Heart left ventricle (tissue), 16 donors: ENCODE measurements at regions of chr7 and their contacts with region 1.

Region 1: DNA sequence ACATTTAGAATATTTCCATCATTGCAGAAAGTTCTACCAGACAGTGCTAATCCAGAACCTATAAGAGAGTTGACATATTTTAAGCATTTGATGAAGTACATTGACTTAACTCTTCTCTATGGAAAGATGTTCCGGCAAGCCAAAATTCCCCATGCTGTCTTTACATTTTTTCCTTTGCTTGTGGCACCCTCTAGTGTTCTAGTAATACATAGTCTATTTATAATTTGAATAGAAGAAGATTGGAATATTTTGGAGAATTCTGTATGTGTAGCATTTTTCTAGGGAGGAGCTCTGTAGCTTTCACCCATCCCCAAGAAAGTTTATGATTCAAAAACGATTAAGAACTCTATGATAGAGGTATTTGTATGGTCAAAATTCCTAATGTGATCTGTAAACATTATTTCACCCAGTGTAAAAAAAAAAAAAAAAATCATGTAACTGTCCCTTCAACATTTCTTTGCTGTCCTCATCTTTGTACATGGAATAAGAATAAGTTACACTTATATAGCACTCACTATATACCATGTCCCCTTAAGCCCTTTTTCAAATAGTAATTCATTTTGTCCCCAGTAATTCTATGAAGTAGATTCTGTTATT is 33.2 kb downstream of the NRF1 start:
- DNase-seq: no peak
- ATAC-seq: peak in 2 of 4 donors; percentile 37 to 44
- H3K4me3 ChIP-seq: no peak overlapping the region
- H3K27ac ChIP-seq: no peak overlapping the region
- H3K4me1 ChIP-seq: peaks cover 0 to 36% (median 15%) of the 10 kb centered on the region in 12 donors
- H3K27me3 ChIP-seq: no peaks in the 10 kb centered on the region
- CTCF ChIP-seq: peak in 11 of 12 donors; percentile 26 to 62 (median 47)
- POLR2A ChIP-seq: no peak

Region 2: DNA sequence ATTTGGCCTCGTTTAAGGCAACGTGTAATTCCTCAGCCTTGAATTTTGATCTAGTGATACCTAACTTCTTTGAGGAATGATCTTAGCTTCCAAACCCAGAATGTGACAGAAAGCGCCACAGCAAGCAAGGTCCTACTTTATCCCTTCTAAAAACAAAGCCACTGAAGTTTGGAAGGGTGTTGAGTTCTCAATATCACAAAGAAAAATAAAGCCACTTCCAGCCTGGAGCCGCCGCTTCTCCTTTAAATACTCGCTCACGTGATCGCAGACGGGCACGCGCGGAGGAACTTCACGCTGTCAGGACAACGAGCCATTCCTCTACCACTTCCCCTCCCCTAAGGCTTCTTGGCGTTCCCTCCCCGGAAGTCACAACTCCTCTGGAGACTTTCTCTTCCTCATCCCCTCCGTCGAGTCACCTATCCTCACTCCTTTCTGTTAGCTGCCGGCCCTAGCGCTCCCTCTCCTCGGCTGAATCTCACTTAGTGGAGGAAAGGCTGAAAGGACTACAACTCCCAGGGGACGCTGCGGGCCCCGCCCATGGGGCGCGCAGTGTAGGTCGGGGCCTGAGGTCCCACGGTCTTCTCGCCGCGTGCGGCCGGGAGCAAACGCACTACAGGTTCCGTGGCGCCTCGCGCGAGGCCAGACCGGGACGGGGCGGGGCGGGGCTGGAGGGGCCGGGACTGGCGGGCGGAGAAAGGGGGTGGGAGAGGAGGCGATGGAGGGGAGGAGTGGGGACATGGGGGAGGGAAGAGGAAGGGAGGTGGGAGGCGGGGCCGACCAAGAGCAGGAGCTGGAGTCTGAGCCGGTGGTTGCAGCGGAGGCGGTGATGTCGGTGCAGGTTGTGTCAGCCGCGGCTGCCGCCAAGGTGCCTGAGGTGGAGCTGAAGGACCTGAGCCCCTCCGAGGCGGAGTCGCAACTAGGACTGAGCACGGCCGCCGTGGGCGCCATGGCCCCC is 420.2 kb before region 1 on chr7 and contains the start of gene AHCYL2:
- intact Hi-C with region 1: loop called in 1 of 10 experiments (anchors 10 kb)
- DNase-seq: peak; percentile 98 to 99 (median 99)
- ATAC-seq: peak; percentile 99 to 100 (median 99)
- H3K4me3 ChIP-seq: peak within 1 kb of the TSS; percentile 71 to 99 (median 85)
- H3K27ac ChIP-seq: peak within 1 kb of the TSS; percentile 90 to 99 (median 95)
- H3K4me1 ChIP-seq: peaks cover 0 to 31% (median 9%) of the 10 kb centered on the region in 12 donors
- H3K27me3 ChIP-seq: no peaks in the 10 kb centered on the region
- CTCF ChIP-seq: no peak
- POLR2A ChIP-seq: peak in 1 of 2 donors; percentile 25
- total RNA-seq, gene AHCYL2: 3.6 to 7.6 (median 6.5) TPM

Region 3: DNA sequence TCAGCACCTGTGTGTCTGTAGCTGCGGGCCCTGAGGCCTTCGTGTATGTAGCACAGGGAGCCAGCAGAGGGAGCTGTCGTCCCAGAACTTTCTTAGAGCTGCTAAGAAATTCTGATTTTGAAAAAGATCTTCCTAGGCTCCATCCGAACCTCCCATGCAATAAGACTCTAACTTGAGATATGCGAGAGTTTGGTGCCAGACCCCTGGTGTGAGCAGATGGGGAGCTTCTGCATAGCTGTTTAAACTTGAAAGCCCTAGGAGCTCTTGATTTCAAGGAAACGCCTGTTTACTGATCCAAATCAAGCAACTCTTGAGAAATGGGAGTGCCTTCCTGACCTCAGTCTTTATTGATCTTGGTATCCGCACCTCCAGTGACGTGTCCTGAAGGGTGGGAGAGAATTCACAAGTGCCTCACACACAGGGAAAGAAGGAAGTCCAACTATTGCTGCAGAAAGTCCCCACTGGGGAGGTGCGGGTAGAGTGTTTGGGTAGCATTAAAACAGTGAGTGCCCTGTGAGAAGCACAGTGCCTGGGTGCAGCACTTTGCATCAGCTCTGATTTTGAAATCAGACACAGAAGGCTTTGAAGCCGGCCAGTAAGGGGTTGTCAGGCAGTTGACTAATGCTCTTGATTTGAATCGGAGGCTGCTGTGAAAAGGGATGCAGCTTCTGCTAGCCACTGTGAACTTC is 276.9 kb before region 1 on chr7:
- intact Hi-C with region 1: loop called in 9 of 10 experiments (anchors 5 to 10 kb)
- DNase-seq: peak; percentile 54 to 78 (median 73)
- ATAC-seq: peak; percentile 62 to 88 (median 88)
- H3K4me3 ChIP-seq: peak overlapping the region in 6 of 12 donors; percentile 6 to 25 (median 18)
- H3K27ac ChIP-seq: no peak overlapping the region
- H3K4me1 ChIP-seq: peaks cover 0 to 14% (median 5%) of the 10 kb centered on the region in 12 donors
- H3K27me3 ChIP-seq: no peaks in the 10 kb centered on the region
- CTCF ChIP-seq: peak; percentile 78 to 94 (median 86)
- POLR2A ChIP-seq: no peak

Region 4: DNA sequence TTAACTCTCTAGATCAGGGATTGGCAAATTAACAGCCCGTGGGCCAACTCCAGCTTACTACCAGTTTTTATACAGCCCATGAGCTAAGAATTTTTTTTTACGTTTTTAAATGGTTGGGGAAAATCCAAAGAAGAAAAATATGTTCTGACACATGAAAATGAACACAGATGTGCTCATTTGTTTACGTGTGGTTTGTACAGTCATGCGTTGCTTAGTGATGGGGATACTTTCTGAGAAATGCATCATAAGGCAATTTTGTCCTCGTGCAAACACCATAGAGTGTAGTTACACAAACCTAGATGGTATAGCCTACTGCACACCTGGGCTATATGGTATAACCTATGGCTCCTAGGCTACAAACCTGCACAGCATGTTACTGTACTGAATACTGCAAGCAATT is 150.7 kb before region 1 on chr7:
- intact Hi-C with region 1: loop called in 4 of 10 experiments (anchors 10 kb)
- DNase-seq: no peak
- ATAC-seq: no peak
- H3K4me3 ChIP-seq: no peak overlapping the region
- H3K27ac ChIP-seq: no peak overlapping the region
- H3K4me1 ChIP-seq: no peaks in the 10 kb centered on the region
- H3K27me3 ChIP-seq: no peaks in the 10 kb centered on the region
- CTCF ChIP-seq: no peak
- POLR2A ChIP-seq: no peak

Region 5: DNA sequence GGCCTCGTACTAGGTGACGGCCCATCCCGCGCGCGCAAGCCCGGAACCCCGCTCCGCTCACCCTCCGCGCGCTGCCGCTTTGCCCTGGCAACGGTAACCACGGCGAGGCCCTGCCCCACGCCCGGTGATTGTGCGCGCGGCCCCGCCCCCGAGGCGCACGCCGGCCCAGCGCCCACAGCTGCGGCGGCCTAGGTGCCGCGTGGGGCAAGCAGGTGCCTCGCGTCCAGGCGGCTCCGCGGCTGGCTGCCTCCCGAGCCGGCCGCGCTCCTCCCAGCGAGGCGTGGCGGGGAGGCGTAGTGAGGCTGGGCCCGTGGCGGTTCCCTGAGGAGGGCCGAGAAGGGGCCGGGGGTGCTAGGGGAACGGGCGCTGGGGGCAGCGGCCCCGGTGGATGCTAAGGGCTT is 142.4 kb before region 1 on chr7 and contains the start of gene SMKR1:
- intact Hi-C with region 1: loop called in 5 of 10 experiments (anchors 5 to 10 kb)
- DNase-seq: peak; percentile 51 to 92 (median 62)
- ATAC-seq: peak; percentile 64 to 91 (median 90)
- H3K4me3 ChIP-seq: peak within 1 kb of the TSS; percentile 33 to 69 (median 54)
- H3K27ac ChIP-seq: no peak within 1 kb of the TSS
- H3K4me1 ChIP-seq: peaks cover 0 to 16% (median 7%) of the 10 kb centered on the region in 12 donors
- H3K27me3 ChIP-seq: peaks cover 0 to 17% (median 0%) of the 10 kb centered on the region in 9 donors
- CTCF ChIP-seq: no peak
- POLR2A ChIP-seq: no peak
- total RNA-seq, gene SMKR1: 0.25 TPM in 1 of 9 donors, not detected in the others